ENCODE measurements at regions of chr12 and their contacts with region 1.

Region 1: DNA sequence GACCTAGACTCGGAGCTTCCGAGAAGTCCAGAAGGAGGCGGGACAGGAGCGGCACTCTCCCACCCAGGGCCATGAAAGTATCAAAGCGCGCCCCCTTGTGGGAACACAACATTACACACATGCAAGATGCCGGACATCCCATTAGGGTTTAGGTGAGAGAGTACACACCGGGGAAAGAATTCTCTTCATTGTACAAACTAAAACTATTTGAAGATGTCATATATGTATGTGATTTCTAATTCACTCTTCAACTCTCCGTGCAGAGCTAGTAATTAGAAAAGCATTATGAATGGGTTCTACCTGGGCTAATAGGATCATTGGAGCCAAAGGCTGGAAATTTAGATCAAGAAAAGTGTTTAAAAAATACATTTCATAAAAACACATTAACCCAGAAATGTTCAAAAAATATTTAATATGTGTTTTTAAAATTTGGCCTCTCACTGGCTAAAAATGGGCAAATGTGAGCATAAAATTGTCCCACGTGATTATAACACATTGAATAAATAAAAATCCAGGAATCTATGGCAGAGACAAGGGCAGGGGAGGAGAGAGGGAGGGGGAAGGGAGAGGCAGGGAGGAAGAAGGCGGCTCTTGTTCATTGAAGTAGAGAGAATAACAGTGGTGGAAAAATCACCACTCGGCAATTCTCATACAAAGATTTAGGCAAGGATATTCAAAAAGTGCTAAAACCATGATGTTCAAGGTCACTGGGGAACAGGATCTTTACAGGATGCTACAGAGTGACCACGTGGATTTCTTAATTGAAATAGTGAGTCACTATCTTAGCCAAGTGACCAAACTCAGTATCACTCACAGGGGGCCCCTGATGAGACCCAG is 38.9 kb downstream of the FBXO21 start:
- DNase-seq: peak; percentile 90
- ATAC-seq: peak; percentile 38
- H3K4me3 Mint-ChIP-seq: no peak overlapping the region
- H3K27ac Mint-ChIP-seq: peak overlapping the region; percentile 64
- H3K4me1 Mint-ChIP-seq: peaks cover 23% of the 10 kb centered on the region
- H3K27me3 Mint-ChIP-seq: no peaks in the 10 kb centered on the region
- CTCF ChIP-seq: peak; percentile 76

Region 2: DNA sequence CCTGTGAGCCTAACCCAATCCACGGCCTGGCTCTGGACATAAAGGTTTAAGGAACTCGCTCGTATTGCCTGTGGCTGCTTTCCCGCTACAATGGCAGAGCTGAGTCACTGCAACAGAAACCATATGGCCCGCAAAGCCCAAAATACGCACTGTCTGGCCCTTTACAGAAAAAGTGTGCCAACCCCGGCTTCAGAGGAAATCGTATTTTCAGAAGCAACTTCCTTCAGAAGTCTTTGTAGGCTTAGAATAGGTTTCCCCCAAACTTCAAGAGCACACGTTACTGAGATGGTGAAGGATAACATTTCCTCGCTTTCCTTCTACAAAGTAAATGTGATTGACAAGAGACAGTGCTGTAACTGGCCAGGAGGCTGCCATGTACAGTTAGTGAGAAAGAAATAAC is 17.4 kb before region 1 on chr12:
- CTCF ChIA-PET with region 1: interaction called, 11 read pairs
- POLR2A ChIA-PET with region 1: no interaction called
- DNase-seq: no peak
- ATAC-seq: no peak
- H3K4me3 Mint-ChIP-seq: no peak overlapping the region
- H3K27ac Mint-ChIP-seq: no peak overlapping the region
- H3K4me1 Mint-ChIP-seq: no peaks in the 10 kb centered on the region
- H3K27me3 Mint-ChIP-seq: no peaks in the 10 kb centered on the region
- CTCF ChIP-seq: no peak

Region 3: DNA sequence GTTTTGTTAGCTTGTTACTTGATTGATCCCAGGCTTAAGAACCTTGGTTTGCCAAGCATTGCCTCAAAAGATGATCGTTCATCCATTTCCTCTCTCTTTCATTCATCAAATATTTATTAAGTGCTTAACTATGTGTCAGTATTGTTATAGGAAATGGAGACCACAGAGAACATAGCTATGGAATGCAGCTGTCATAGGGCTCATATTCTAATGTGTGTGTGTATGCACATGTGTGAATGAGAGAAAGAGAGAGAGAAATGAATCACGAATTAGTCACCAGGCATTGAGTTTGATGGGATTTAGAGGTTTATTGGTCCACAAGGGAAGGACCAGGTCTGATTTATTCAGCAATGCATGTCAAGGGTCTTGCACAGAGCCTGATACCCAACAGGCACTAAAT is 109.8 kb after region 1 on chr12:
- CTCF ChIA-PET with region 1: no interaction called
- POLR2A ChIA-PET with region 1: no interaction called
- DNase-seq: no peak
- ATAC-seq: no peak
- H3K4me3 Mint-ChIP-seq: no peak overlapping the region
- H3K27ac Mint-ChIP-seq: no peak overlapping the region
- H3K4me1 Mint-ChIP-seq: no peaks in the 10 kb centered on the region
- H3K27me3 Mint-ChIP-seq: no peaks in the 10 kb centered on the region
- CTCF ChIP-seq: no peak

Region 4: DNA sequence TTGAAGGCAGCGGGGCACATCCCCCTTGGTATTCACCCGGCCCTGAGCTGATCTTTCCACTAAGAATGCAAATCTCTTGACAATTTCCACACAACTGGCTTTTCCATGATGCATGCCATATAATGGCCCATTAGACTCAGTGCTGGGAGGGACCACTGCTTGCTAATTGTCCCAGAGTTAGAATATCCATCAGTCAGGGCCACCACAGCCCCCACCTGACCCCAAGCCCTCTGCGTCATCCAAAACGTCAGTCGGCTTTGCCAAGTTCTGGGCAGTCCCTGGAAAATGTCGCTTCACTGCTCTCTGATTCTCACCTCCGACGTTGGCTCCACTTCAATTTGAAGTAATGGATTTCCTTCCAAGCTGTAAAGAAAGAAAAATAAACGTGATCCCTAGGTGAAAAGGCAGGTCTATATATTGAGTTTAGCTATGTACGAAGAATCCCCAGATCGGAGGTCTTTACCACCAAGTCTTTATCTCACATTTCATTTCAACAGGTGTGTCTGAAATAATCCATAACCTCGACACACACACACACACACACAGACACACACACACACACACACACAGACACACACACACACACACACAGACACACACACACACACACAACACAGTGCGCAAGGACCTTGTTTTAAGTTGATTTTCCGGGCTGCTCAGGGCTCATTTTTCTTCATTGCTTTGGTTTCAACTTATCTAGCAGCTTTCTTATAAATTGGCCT is 375.5 kb after region 1 on chr12:
- CTCF ChIA-PET with region 1: no interaction called
- POLR2A ChIA-PET with region 1: no interaction called
- DNase-seq: no peak
- ATAC-seq: no peak
- H3K4me3 Mint-ChIP-seq: no peak overlapping the region
- H3K27ac Mint-ChIP-seq: no peak overlapping the region
- H3K4me1 Mint-ChIP-seq: no peaks in the 10 kb centered on the region
- H3K27me3 Mint-ChIP-seq: no peaks in the 10 kb centered on the region; the same call in 1 of the 2 replicates
- CTCF ChIP-seq: no peak